Endothelial cell of umbilical vein (primary cell): ENCODE measurements at regions of chr4 and their contacts with region 1.

Region 1: DNA sequence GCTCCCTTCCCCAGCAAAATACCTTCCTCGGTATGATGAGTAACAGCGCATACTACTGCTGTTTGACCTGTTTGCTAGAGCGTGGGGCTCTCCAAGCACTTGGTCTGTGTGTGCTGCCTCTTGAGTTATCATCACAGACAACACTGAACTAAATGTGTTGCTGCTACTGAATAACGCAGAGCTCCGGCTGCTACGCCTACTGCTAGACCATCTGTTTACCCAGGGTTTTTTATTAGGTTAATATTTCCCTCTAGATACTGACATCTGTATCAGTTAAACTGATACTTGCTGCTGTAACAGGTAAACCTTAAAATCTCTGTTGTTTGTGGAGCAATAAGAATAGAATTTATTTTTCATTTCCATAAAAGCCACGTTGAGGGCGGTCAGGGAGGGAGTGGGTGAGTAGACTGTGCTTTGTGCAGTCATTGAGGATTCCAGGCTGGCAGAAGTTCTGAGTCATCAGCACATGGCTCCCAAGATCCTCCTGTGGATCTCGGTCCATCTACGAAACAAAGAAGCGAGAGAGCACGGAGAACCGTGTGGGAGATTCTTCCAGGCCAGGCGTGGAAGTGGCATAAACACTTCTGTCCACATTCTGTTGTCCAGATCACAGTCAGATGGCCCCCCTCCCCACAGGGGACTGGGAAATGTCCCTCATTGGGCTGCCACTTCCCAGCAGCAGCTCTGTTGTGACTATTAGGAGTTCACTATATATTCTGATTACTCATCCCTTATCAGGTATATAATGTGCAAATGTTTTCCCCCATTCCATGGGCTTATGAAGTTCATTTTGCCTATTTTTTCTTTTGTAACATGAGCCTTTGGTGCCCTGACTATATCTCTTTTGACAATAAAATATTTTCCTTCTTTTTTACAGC is 14.1 kb downstream of the GRK4 start:
- DNase-seq: no peak
- H3K4me3 ChIP-seq: no peak overlapping the region
- H3K27ac ChIP-seq: no peak overlapping the region
- H3K4me1 ChIP-seq: no peaks in the 10 kb centered on the region
- H3K27me3 ChIP-seq: peaks cover 0 to 3% of the 10 kb centered on the region in 2 experiments
- CTCF ChIP-seq: no peak
- POLR2A ChIP-seq: no peak

Region 2: DNA sequence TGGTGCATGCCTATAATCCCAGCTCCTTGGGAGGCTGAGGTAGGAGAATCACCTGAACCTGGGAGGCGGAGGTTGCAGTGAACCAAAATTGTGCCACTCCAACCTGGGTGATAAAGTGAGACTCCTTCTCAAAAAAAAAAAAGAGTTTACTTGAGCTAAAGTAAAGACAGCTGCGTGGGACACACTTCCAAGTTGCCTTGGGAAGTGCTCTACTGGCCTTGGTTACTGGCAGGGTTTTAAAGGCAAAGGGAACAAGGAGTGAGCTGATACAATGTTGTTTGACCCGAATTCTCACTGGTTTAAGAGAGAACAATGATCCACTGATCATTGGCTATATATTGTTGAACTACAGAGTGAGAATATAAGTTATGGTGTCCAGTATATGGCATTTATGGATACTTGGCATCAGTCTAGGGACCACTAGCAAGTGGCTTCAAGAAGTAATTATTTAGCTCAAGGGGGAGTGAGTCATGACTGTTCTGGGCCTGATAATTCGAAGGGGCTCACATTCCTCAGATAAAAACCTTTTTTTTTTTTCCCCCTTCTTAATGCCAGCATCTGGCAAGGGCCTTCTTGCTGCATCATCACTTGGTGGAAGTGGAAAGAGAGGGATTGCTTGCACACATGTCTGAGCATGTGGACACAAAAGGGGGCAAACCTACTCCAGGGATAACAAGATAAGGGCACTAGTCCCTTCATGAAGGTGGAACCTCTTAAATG is 18.3 kb after region 1 on chr4:
- CTCF ChIA-PET with region 1: interaction called, 13 read pairs
- POLR2A ChIA-PET with region 1: no interaction called
- dilution Hi-C with region 1: no loop called
- intact Hi-C with region 1: no loop called
- DNase-seq: no peak
- H3K4me3 ChIP-seq: no peak overlapping the region
- H3K27ac ChIP-seq: no peak overlapping the region
- H3K4me1 ChIP-seq: no peaks in the 10 kb centered on the region
- H3K27me3 ChIP-seq: peaks cover 3 to 5% of the 10 kb centered on the region in 2 experiments
- CTCF ChIP-seq: no peak
- POLR2A ChIP-seq: no peak

Region 3: GRCh38 chr4:3037957-3038461 is 60.6 kb after region 1 on chr4:
- CTCF ChIA-PET with region 1: interaction called, 35 read pairs
- POLR2A ChIA-PET with region 1: no interaction called
- dilution Hi-C with region 1: no loop called
- intact Hi-C with region 1: loop called (anchors 2 kb)
- DNase-seq: no peak
- H3K4me3 ChIP-seq: no peak overlapping the region
- H3K27ac ChIP-seq: no peak overlapping the region
- H3K4me1 ChIP-seq: peaks cover 7% of the 10 kb centered on the region
- H3K27me3 ChIP-seq: no peaks in the 10 kb centered on the region
- CTCF ChIP-seq: no peak
- POLR2A ChIP-seq: no peak

Region 4: DNA sequence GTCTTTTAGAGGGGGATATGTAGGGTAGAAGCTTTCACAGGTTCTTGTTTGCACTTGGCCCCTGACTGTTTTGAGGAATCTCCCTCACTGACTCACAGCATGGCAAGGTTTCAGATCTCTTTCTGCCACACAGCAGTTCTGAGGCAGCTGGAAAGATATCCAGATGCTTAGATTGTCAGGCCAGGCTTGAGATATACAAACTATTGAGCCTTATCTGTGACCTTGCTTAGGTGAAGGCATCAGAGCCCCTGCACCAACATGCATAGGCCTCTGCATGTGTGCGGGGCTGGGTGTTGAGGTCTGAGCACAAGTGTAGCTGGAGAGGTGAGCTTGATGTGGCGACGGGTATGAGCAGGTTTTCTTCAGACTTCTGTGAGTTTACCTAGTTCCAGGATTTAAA is 190.6 kb after region 1 on chr4:
- CTCF ChIA-PET with region 1: no interaction called
- POLR2A ChIA-PET with region 1: no interaction called
- dilution Hi-C with region 1: no loop called
- intact Hi-C with region 1: no loop called
- DNase-seq: no peak
- H3K4me3 ChIP-seq: no peak overlapping the region
- H3K27ac ChIP-seq: no peak overlapping the region
- H3K4me1 ChIP-seq: no peaks in the 10 kb centered on the region
- H3K27me3 ChIP-seq: no peaks in the 10 kb centered on the region
- CTCF ChIP-seq: no peak
- POLR2A ChIP-seq: no peak